Activated naive CD4-positive, alpha-beta T cell treated with anti-CD3 and anti-CD28 coated beads, Interleukin-2, amount 10 ng/mL, durations not matched to agents 7 days and 5 days (primary cell): ENCODE measurements at regions of chr9 and their contacts with region 1.

Region 1: GRCh38 chr9:93453047-93453914 is at the start of gene FAM120AOS:
- DNase-seq: peak; percentile 91
- H3K4me3 Mint-ChIP-seq: peak within 1 kb of the TSS; percentile 94
- H3K27ac Mint-ChIP-seq: peak within 1 kb of the TSS; percentile 94
- H3K4me1 Mint-ChIP-seq: peaks cover 57% of the 10 kb centered on the region
- H3K27me3 Mint-ChIP-seq: no peaks in the 10 kb centered on the region

Region 2: DNA sequence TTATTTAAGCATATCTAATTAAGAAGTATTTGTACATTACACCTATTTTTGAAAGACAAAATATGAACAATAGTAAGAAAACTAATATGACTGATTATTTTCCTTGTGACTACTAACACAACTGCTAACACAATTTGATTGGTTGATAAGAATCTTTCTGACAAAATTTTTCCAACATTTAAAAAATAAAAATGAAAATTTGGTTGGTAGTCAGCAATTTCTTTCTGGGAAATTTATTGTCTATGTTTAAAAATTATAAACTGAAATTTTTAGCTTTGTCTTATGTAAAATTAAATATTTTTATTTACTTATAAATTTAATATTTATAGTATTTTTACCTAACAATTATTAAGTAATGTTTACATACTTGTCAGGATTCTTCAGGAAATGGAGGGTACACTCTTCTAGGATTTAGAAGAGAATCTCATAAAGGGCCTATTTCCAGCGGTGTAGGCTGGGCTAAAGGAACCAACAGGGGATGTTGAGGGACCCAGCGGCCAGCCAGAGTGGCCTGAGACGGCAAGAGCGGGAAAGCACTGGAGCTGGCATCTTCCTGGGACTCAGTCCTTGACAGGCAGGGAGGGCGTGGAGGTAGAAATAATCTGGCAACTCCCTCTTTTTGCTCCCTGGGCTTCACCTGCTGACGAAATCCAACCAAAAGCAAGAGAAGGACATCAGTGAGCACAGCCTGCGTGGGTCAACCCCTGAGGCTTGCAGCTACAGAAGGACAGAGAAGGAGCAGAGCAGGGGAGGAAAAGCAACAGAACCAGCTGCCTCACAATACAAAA is 16.4 kb before region 1 on chr9:
- CTCF ChIA-PET with region 1: no interaction called
- DNase-seq: no peak
- H3K4me3 Mint-ChIP-seq: no peak overlapping the region
- H3K27ac Mint-ChIP-seq: no peak overlapping the region
- H3K4me1 Mint-ChIP-seq: no peaks in the 10 kb centered on the region
- H3K27me3 Mint-ChIP-seq: no peaks in the 10 kb centered on the region

Region 3: GRCh38 chr9:93464395-93464794 is 11.1 kb after region 1 on chr9:
- CTCF ChIA-PET with region 1: interaction called, 18 read pairs
- DNase-seq: no peak
- H3K4me3 Mint-ChIP-seq: peak overlapping the region; percentile 36
- H3K27ac Mint-ChIP-seq: peak overlapping the region; percentile 93
- H3K4me1 Mint-ChIP-seq: peaks cover 89% of the 10 kb centered on the region
- H3K27me3 Mint-ChIP-seq: no peaks in the 10 kb centered on the region

Region 4: DNA sequence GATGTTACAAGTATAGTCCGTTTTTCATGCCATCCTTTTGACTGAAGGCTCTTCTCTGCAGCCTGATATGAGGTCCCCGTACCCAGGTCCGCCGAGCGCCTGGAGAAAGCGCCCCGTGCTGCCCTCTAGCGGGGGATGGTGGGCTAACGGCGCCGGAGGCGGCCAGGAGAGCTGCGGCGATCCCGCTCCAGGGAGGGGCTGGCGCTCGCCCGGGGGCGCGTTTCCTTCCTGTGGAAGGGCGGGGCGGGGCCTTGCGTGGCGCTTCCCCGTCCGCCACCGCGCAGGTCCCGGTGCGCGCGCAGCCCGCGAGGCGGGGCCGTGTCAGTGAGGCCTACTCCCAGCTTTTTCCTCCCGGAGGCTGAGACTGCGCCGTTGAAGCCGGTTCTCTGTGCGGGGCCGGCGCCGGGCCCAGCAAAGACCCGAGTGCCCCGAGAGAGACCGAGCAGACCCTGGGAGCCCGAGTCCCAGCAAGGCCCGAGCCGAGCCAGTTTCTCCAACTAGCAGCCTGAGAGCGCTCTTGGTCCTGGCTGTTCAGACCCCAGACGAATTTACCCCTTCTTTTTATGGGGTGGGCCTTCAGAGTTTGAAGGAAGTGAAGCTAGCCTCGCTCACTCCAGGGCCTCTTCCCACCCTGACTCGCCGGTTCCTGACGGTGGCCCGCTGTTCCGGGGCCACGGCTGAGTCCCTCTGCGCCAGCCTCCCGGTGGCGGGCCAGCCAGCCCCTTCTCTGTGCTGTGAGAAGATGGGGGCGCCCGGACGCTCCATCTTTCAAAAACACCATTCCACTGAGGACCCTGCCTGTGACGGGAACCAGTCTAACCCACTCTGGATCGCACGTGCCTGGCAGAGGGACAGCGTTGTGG is 113.4 kb after region 1 on chr9:
- CTCF ChIA-PET with region 1: interaction called, 12 read pairs
- DNase-seq: peak; percentile 98
- H3K4me3 Mint-ChIP-seq: peak overlapping the region; percentile 84
- H3K27ac Mint-ChIP-seq: peak overlapping the region; percentile 90
- H3K4me1 Mint-ChIP-seq: peaks cover 28% of the 10 kb centered on the region
- H3K27me3 Mint-ChIP-seq: no peaks in the 10 kb centered on the region

Region 5: DNA sequence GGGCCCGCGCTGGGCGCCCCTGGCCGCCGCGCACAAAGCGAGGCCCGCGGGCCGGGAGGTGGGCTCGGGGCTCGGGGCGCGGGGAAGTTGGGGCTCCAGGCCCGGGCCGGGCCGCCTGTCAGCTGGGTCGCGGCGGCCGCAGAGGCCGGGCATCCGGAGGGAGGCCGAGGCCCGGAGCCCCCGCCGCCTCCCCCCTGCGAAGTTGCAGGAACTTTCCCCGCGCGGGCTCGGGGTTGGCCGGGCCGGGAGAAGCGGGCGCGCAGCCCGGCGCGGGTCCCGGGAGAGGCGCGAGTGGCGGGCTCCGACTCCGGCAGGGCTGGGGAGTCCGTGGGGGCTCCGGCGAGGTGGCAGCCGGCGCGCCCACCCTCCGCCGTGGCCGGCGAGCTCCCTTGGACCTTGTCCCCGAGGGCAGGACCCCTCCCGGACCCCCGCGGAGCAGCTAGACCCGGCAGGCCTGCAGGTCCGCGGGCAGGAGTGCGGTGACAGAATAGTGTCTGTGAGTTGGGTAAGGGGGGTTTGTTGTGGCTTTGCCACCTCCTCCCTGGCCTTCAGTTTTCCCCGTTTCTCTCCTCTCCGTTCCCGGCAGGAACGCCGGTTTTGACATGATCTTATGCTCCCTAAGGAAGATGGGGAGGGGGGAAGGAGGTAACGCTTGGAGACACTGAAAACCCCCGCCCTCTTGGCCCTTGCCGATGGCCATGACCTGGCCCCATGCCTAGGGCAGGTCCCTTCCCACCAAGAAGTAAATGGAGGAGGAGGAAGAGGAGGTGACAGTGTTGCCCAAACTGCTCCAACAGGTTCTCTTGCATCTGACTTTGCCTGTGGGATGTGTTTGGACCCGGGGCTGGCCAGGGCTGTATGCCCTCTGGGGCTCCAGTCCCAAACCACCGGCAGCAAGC is 124.0 kb after region 1 on chr9:
- CTCF ChIA-PET with region 1: no interaction called
- DNase-seq: peak; percentile 52
- H3K4me3 Mint-ChIP-seq: peak overlapping the region; percentile 83
- H3K27ac Mint-ChIP-seq: peak overlapping the region; percentile 84
- H3K4me1 Mint-ChIP-seq: peaks cover 38% of the 10 kb centered on the region
- H3K27me3 Mint-ChIP-seq: peaks cover 10% of the 10 kb centered on the region